ENCODE measurements at regions of chr6 and their contacts with region 1.

Region 1: DNA sequence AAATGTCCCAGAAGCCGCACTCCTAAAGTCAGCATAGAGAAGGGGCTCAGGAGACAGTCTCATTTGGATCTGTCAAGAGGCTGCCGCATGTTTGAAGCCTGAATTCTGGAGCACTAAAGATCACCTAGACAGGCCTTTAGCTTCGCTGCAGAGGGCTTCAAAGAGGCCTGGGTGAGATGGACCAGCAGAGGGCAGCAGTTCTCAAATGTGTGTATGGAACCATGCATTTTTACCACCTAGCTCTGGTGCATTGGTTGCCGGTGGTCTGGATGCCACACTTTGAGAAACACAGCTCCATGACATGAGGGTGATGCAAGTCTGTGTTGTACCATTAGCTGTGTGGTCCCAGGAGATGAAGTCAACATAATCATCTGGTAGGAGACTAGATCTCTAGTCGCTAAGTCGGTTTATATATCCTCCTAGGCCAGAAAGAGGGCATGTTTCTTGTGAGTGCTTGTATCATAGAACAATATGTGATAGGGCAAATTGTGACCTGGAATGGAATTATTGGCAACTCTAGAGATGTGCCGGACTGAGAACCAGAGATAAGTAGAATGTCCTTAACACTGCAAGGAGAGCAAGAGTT is 64.8 kb downstream of the KIAA0319 start:
- DNase-seq: peak; percentile 64 to 75
- ATAC-seq: peak; percentile 67 to 85 (median 78)
- H3K4me3 ChIP-seq: no peak overlapping the region
- H3K27ac ChIP-seq: no peak overlapping the region
- H3K4me1 ChIP-seq: peaks cover 0 to 14% (median 8%) of the 10 kb centered on the region in 9 donors
- H3K27me3 ChIP-seq: no peaks in the 10 kb centered on the region
- CTCF ChIP-seq: peak; percentile 63 to 88 (median 81)

Region 2: DNA sequence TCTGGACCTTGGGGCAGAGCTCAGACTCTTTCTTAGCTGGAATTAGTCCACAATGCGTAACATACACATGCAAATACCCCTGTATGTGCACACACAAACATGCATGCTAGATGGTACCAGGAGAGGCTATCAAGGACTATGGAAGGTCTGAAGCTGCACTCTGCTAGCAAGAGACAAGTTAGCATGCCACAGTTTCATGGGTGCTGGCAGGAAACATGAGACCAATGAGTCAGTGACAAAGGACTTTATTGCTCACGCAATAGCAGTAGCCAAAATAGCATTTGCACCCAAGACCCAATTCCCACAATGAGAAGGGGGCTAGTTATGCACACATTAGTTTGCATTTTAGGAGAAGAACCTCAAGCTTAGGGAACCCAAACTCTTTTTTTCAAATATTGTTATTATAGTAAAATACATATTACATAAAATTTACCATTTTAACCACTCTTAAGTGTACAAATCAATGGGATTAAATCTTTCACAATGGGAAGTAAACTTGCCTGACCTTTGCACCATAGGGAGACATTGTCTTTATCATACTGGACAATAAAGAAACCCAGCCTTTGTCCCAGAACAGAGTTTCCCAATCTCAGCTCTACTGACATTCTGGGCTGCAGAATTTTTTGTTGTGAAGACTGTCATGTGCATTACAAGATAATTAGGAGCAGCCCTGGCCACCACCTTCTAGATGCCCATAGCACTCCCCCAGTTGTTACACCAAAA is 386.0 kb before region 1 on chr6:
- intact Hi-C with region 1: no loop called
- DNase-seq: no peak
- ATAC-seq: no peak
- H3K4me3 ChIP-seq: no peak overlapping the region
- H3K27ac ChIP-seq: no peak overlapping the region
- H3K4me1 ChIP-seq: no peaks in the 10 kb centered on the region
- H3K27me3 ChIP-seq: peaks cover 0 to 29% (median 0%) of the 10 kb centered on the region in 7 donors
- CTCF ChIP-seq: no peak

Region 3: DNA sequence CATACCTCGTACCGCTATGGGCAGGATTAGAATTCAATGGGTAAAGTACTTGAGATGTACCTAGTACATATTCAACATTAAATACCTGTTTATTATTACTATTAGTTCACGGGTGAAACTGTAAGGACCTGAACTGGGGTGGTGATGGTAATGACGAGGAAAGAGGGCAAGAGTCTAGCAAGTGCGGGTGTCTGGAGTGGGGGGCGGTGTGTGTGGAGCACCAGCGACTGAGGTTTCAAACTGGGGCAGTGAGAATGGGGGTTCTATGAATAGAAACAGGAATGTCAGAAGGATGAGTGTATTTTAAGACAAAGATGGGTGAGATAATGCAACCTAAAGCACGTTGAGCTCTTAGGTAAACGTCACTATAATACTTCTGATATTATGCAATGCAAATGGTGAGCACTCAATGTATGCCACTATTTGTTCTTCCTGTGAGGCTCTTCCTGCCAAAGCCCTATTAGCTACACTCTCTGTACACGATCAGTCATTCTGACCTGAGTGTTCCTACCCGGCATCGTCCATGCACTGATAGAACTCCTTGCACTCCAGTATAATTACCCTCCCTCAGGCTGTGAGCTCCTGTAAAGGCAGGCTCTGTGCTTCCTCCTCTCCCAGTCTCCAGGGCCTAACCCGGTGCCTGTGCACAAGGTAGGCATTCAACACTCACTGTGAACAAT is 31.4 kb before region 1 on chr6:
- intact Hi-C with region 1: no loop called
- DNase-seq: no peak
- ATAC-seq: no peak
- H3K4me3 ChIP-seq: no peak overlapping the region
- H3K27ac ChIP-seq: no peak overlapping the region
- H3K4me1 ChIP-seq: peaks cover 0 to 6% (median 0%) of the 10 kb centered on the region in 9 donors
- H3K27me3 ChIP-seq: peaks cover 0 to 35% (median 15%) of the 10 kb centered on the region in 7 donors
- CTCF ChIP-seq: no peak

Region 4: DNA sequence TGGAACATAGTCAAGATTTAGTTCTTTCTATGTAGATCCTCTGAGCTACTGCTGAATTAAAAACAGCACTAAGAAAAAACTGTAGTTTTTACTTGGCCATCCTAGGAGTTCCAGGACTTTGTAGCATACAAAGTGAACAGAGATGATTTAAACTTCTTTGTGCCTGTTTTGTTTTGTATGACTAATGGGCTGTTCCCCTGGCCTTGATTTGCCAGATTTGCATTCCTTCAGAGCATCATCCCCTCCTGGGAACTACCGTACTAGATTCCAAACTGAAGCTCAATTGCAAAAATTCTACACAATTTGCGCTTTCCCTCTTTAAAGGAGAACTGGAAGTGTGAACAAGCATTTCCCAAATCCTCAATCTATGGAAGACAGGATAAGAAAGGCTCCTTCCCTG is 108.8 kb after region 1 on chr6:
- intact Hi-C with region 1: loop called (anchors 1 to 5 kb)
- DNase-seq: no peak
- ATAC-seq: peak in 1 of 8 donors; percentile 55
- H3K4me3 ChIP-seq: no peak overlapping the region
- H3K27ac ChIP-seq: no peak overlapping the region
- H3K4me1 ChIP-seq: peaks cover 0 to 23% (median 12%) of the 10 kb centered on the region in 9 donors
- H3K27me3 ChIP-seq: no peaks in the 10 kb centered on the region
- CTCF ChIP-seq: no peak

Region 5: GRCh38 chr6:24761193-24761835 is 180.1 kb after region 1 on chr6:
- intact Hi-C with region 1: loop called in 8 of 10 experiments (anchors 2 to 10 kb)
- DNase-seq: no peak
- ATAC-seq: peak in 1 of 8 donors; percentile 31
- H3K4me3 ChIP-seq: no peak overlapping the region
- H3K27ac ChIP-seq: no peak overlapping the region
- H3K4me1 ChIP-seq: peaks cover 0 to 13% (median 0%) of the 10 kb centered on the region in 9 donors
- H3K27me3 ChIP-seq: no peaks in the 10 kb centered on the region
- CTCF ChIP-seq: no peak

Region 6: GRCh38 chr6:24774696-24775519 is 193.7 kb after region 1 on chr6 and contains the start of gene GMNN:
- intact Hi-C with region 1: loop called in 3 of 10 experiments (anchors 5 kb)
- DNase-seq: peak; percentile 99
- ATAC-seq: peak; percentile 97 to 100 (median 99)
- H3K4me3 ChIP-seq: peak within 1 kb of the TSS; percentile 82 to 98 (median 91)
- H3K27ac ChIP-seq: peak within 1 kb of the TSS; percentile 38 to 95 (median 91)
- H3K4me1 ChIP-seq: peaks cover 0 to 41% (median 10%) of the 10 kb centered on the region in 9 donors
- H3K27me3 ChIP-seq: no peaks in the 10 kb centered on the region
- CTCF ChIP-seq: peak in 1 of 9 donors; percentile 13
- total RNA-seq, gene GMNN: 3.1 to 10.9 (median 6.8) TPM

Region 7: GRCh38 chr6:24991810-24992467 is 410.8 kb after region 1 on chr6:
- intact Hi-C with region 1: no loop called
- DNase-seq: peak; percentile 17 to 42
- ATAC-seq: peak in 6 of 8 donors; percentile 73 to 87 (median 80)
- H3K4me3 ChIP-seq: no peak overlapping the region
- H3K27ac ChIP-seq: peak overlapping the region in 1 of 10 donors; percentile 57
- H3K4me1 ChIP-seq: peaks cover 0 to 22% (median 0%) of the 10 kb centered on the region in 9 donors
- H3K27me3 ChIP-seq: no peaks in the 10 kb centered on the region
- CTCF ChIP-seq: peak; percentile 52 to 84 (median 81)

Region 8: GRCh38 chr6:25601800-25602673 is 1020.9 kb after region 1 on chr6:
- intact Hi-C with region 1: loop called in 1 of 10 experiments (anchors 10 kb)
- DNase-seq: no peak
- ATAC-seq: no peak
- H3K4me3 ChIP-seq: no peak overlapping the region
- H3K27ac ChIP-seq: no peak overlapping the region
- H3K4me1 ChIP-seq: no peaks in the 10 kb centered on the region
- H3K27me3 ChIP-seq: peaks cover 0 to 5% (median 0%) of the 10 kb centered on the region in 7 donors
- CTCF ChIP-seq: peak; percentile 26 to 76 (median 59)

Measured in heart right ventricle (tissue), 16 donors.